Dorsolateral prefrontal cortex (tissue), 120 donors: ENCODE measurements at regions of chr14 and their contacts with region 1.

Region 1: DNA sequence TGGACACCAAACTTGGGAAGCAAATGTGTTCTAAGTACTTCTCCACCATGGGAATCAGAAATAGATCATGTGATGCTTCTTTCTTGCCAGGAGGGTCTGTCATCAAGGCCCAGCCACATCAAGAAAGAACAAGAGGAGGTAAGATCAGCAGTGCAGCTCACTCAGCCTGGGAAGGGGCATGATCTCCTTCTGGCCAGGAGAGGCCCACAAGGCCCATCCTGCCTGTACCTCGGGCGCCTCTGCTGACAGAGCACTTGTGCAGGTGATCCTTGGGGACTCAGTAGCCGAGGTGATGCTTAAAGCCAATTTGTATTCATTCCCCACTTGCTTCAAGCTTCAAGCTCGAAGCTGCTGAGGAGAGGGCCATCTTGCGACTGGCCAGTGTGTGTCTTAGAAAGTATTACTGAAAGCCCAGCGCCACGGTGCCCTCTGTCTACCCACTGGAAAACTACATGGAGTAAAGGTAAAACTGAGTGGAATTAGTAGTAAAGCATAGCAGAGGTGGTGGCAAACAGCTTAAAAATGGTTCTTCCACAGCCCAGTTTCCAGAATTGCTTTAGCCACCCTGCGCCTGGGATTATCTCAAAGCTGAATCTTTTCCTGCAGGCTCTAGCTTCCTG is 26.2 kb downstream of the RTRAF start:
- DNase-seq: peak in 8 of 10 donors; percentile 55 to 83 (median 76)
- H3K4me3 ChIP-seq: no peak overlapping the region
- H3K27ac ChIP-seq: peak overlapping the region; percentile 15 to 97 (median 91)
- H3K27me3 ChIP-seq: no peaks in the 10 kb centered on the region
- CTCF ChIP-seq: peak; percentile 21 to 84 (median 68)

Region 2: GRCh38 chr14:51979088-51979709 is 36.3 kb before region 1 on chr14:
- intact Hi-C with region 1: no loop called
- DNase-seq: peak; percentile 77 to 90 (median 84)
- H3K4me3 ChIP-seq: peak overlapping the region in 14 of 59 donors; percentile 3 to 43 (median 20)
- H3K27ac ChIP-seq: no peak overlapping the region
- H3K27me3 ChIP-seq: no peaks in the 10 kb centered on the region
- CTCF ChIP-seq: peak; percentile 79 to 98 (median 95)

Region 3: GRCh38 chr14:51989293-51990234 is 26.0 kb before region 1 on chr14 and contains the start of gene RTRAF:
- intact Hi-C with region 1: loop called in 1 of 2 experiments (anchors 2 kb)
- DNase-seq: peak; percentile 88 to 98 (median 95)
- H3K4me3 ChIP-seq: peak within 1 kb of the TSS; percentile 68 to 100 (median 95)
- H3K27ac ChIP-seq: peak within 1 kb of the TSS; percentile 44 to 93 (median 81)
- H3K27me3 ChIP-seq: no peaks in the 10 kb centered on the region
- CTCF ChIP-seq: peak in 42 of 56 donors; percentile 8 to 64 (median 38)
- total RNA-seq, gene RTRAF: 37.8 to 99.0 (median 69.0) TPM

Region 4: DNA sequence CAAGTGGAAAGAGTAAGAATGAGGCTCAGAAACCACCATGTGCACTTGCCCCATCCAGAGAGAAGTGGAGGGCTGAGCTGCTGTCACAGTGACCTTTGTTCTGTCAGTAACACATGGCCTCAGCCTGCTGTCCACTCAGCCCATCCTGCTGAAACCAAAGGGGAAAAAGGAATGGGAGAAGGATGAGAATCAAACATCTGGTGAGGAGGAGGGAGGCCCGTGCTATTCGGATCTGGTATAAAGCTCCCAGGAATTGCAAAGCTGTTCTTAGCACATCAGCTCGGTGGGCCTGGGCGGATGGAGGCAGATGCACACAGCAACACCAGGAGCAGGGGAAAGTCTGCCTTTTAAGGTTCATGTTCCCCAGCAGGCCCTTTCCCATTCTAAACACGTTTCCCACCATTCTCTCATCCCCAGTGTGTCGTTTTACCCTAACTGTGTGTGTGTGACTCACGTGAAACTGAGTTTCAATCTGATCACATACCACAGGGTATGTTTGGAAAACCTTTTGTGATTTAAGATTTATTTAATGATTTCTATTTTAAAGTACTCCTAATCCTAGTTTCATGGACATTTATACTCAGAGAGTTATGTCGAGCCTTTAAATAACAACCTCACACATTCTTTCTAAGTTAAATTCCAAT is 10.6 kb after region 1 on chr14:
- intact Hi-C with region 1: loop called in 1 of 2 experiments (anchors 1 kb)
- DNase-seq: peak in 1 of 10 donors; percentile 16
- H3K4me3 ChIP-seq: peak overlapping the region in 1 of 59 donors; percentile 25
- H3K27ac ChIP-seq: peak overlapping the region in 56 of 59 donors; percentile 10 to 91 (median 67)
- H3K27me3 ChIP-seq: no peaks in the 10 kb centered on the region
- CTCF ChIP-seq: no peak

Region 5: GRCh38 chr14:52068615-52069303 is 53.2 kb after region 1 on chr14 and contains the start of gene NID2:
- intact Hi-C with region 1: loop called in 1 of 2 experiments (anchors 5 kb)
- DNase-seq: peak; percentile 26 to 77 (median 66)
- H3K4me3 ChIP-seq: peak within 1 kb of the TSS; percentile 49 to 94 (median 72)
- H3K27ac ChIP-seq: peak within 1 kb of the TSS in 48 of 59 donors; percentile 4 to 87 (median 56)
- H3K27me3 ChIP-seq: peaks cover 0 to 18% (median 4%) of the 10 kb centered on the region in 45 donors
- CTCF ChIP-seq: peak in 9 of 56 donors; percentile 4 to 19 (median 9)
- total RNA-seq, gene NID2: 1.7 to 12.5 (median 4.5) TPM

Region 6: GRCh38 chr14:52146504-52146903 is 131.0 kb after region 1 on chr14:
- intact Hi-C with region 1: no loop called
- DNase-seq: no peak
- H3K4me3 ChIP-seq: no peak overlapping the region
- H3K27ac ChIP-seq: no peak overlapping the region
- H3K27me3 ChIP-seq: peaks cover 0 to 7% (median 0%) of the 10 kb centered on the region in 45 donors
- CTCF ChIP-seq: no peak